Astrocyte of the cerebellum (primary cell): ENCODE measurements at regions of chr3 and their contacts with region 1.

Region 1: GRCh38 chr3:52046186-52046913 is 10.0 kb downstream of the DUSP7 start:
- DNase-seq: peak; percentile 60
- H3K4me3 ChIP-seq: no peak overlapping the region
- CTCF ChIP-seq: no peak

Region 2: GRCh38 chr3:51992017-51992682 is 54.2 kb before region 1 on chr3:
- in situ Hi-C with region 1: loop called (anchors 5 kb)
- DNase-seq: no peak
- H3K4me3 ChIP-seq: no peak overlapping the region
- CTCF ChIP-seq: no peak

Region 3: GRCh38 chr3:52090131-52090932 is 44.0 kb after region 1 on chr3:
- in situ Hi-C with region 1: loop called (anchors 5 kb)
- DNase-seq: peak; percentile 96
- H3K4me3 ChIP-seq: no peak overlapping the region
- CTCF ChIP-seq: no peak

Region 4: GRCh38 chr3:52154117-52155094 is 108.1 kb after region 1 on chr3 and contains the start of gene POC1A:
- in situ Hi-C with region 1: loop called (anchors 5 kb)
- DNase-seq: peak; percentile 90
- H3K4me3 ChIP-seq: peak within 1 kb of the TSS; percentile 78
- CTCF ChIP-seq: no peak

Region 5: GRCh38 chr3:52481819-52482521 is 435.6 kb after region 1 on chr3:
- in situ Hi-C with region 1: no loop called
- DNase-seq: no peak
- H3K4me3 ChIP-seq: no peak overlapping the region
- CTCF ChIP-seq: peak; percentile 34